Adrenal gland (tissue), 19 donors: ENCODE measurements at regions of chr5 and their contacts with region 1.

Region 1: DNA sequence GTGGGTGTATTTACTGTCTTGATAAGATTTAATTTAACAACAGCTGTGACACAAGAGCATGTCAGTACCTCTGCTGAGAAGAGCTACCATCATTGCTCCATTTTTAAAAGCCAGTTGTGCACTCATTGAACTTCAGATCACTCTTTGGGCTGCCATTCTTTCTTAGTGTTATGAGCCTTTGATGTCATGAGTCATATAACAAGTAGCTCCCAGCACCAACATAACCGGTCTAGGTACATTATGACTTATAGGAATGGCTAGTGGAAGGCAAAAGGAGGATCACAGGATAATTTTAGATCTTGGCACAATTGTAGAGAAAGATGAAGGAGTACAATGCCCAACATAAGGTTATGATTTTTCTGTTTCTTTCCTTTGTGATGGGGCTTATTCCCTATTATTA is 170.8 kb upstream of the FBN2 start:
- DNase-seq: no peak
- H3K4me3 ChIP-seq: no peak overlapping the region
- H3K27ac ChIP-seq: no peak overlapping the region
- H3K4me1 ChIP-seq: no peaks in the 10 kb centered on the region
- H3K27me3 ChIP-seq: no peaks in the 10 kb centered on the region
- CTCF ChIP-seq: no peak
- POLR2A ChIP-seq: no peak

Region 2: DNA sequence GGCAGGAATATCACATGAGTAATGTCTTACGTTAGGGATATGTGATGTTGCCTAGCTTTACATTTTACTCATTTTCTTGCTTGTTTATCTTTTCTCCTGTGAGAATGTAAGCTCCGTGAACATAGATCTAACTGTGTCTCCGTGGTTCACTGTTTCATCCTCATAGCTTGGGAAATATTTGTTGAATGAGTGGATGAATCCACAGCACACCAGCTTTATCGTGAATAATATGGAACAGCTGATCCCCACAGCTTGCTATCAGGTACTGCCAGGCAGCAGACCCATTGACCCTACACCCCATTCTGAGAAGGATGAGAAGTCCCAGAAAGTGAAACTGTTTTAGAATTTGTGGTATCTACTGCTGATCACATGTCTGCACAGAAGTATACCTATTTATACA is 64.0 kb before region 1 on chr5:
- intact Hi-C with region 1: loop called in 1 of 2 experiments (anchors 10 kb)
- DNase-seq: no peak
- H3K4me3 ChIP-seq: no peak overlapping the region
- H3K27ac ChIP-seq: no peak overlapping the region
- H3K4me1 ChIP-seq: no peaks in the 10 kb centered on the region
- H3K27me3 ChIP-seq: no peaks in the 10 kb centered on the region
- CTCF ChIP-seq: no peak
- POLR2A ChIP-seq: no peak